ENCODE measurements at regions of chr5 and their contacts with region 1.

Region 1: GRCh38 chr5:10563945-10564837 is at the start of gene ANKRD33B:
- DNase-seq: no peak
- ATAC-seq: peak; percentile 64
- H3K4me3 ChIP-seq: peak within 1 kb of the TSS; percentile 87
- H3K27ac ChIP-seq: peak within 1 kb of the TSS; percentile 87
- H3K4me1 ChIP-seq: peaks cover 19% of the 10 kb centered on the region
- H3K27me3 ChIP-seq: no peaks in the 10 kb centered on the region
- CTCF ChIP-seq: no peak
- EP300 ChIP-seq: no peak
- POLR2A ChIP-seq: peak; percentile 93
- RAD21 ChIP-seq: peak; percentile 16; the same call in 1 of the 2 replicates
- polyA plus RNA-seq, gene ANKRD33B: 5.9 to 6.1 TPM

Region 2: GRCh38 chr5:10251405-10251804 is 312.8 kb before region 1 on chr5:
- CTCF ChIA-PET with region 1: no interaction called
- POLR2A ChIA-PET with region 1: no interaction called
- RAD21 ChIA-PET with region 1: no interaction called
- SMC1A ChIA-PET with region 1: no interaction called
- in situ Hi-C with region 1: no loop called
- intact Hi-C with region 1: no loop called
- DNase-seq: no peak
- ATAC-seq: no peak
- H3K4me3 ChIP-seq: peak overlapping the region; percentile 99
- H3K27ac ChIP-seq: peak overlapping the region; percentile 97
- H3K4me1 ChIP-seq: peaks cover 7% of the 10 kb centered on the region; the same call in 1 of the 2 replicates
- H3K27me3 ChIP-seq: no peaks in the 10 kb centered on the region
- CTCF ChIP-seq: no peak
- EP300 ChIP-seq: no peak
- POLR2A ChIP-seq: no peak
- RAD21 ChIP-seq: no peak

Region 3: DNA sequence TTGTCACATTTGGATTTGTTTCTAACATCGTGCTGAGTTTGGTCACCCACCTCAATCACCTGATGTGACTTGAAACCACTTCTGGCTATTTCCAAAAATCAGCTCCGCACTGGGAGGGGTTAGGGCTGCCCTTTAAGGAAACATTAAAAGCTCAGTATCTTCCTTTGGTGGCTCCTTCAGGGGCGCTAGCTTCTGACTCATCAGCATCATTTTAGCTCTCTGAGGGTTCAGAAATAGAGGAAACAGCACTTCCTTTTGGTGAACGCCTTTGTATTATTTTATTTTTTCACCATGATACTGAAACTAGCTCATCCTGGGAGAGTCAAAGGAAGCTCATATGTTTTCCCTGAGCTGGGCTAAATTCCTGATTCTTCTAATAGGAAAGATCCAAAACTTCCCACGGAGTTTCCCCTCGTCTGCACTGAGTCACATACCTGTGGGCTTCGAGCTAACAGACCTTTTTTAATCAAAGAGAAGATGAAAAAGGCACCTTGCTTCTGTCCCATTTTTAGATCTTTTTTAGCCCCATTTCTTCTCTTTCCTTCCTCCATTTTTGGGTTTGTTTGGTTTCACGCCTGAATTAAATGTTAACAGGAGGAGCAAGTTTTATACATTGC is 74.3 kb before region 1 on chr5:
- CTCF ChIA-PET with region 1: interaction called, 5 read pairs
- POLR2A ChIA-PET with region 1: no interaction called
- RAD21 ChIA-PET with region 1: interaction called, 3 read pairs
- SMC1A ChIA-PET with region 1: interaction called, 7 read pairs
- in situ Hi-C with region 1: no loop called
- intact Hi-C with region 1: loop called (anchors 5 kb)
- DNase-seq: peak; percentile 37
- ATAC-seq: peak; percentile 95
- H3K4me3 ChIP-seq: peak overlapping the region; percentile 3; the same call in 1 of the 2 replicates
- H3K27ac ChIP-seq: no peak overlapping the region
- H3K4me1 ChIP-seq: peaks cover 30% of the 10 kb centered on the region
- H3K27me3 ChIP-seq: no peaks in the 10 kb centered on the region
- CTCF ChIP-seq: no peak
- EP300 ChIP-seq: no peak
- POLR2A ChIP-seq: no peak
- RAD21 ChIP-seq: peak; percentile 15; the same call in 1 of the 2 replicates

Region 4: GRCh38 chr5:10577371-10578292 is 13.4 kb after region 1 on chr5:
- CTCF ChIA-PET with region 1: interaction called, 51 read pairs
- POLR2A ChIA-PET with region 1: interaction called, 53 read pairs
- RAD21 ChIA-PET with region 1: interaction called, 54 read pairs
- SMC1A ChIA-PET with region 1: interaction called, 73 read pairs
- in situ Hi-C with region 1: no loop called
- intact Hi-C with region 1: loop called (anchors 2 kb)
- DNase-seq: no peak
- ATAC-seq: peak; percentile 68
- H3K4me3 ChIP-seq: peak overlapping the region; percentile 46; the same call in 1 of the 2 replicates
- H3K27ac ChIP-seq: peak overlapping the region; percentile 77
- H3K4me1 ChIP-seq: peaks cover 64% of the 10 kb centered on the region
- H3K27me3 ChIP-seq: no peaks in the 10 kb centered on the region
- CTCF ChIP-seq: no peak
- EP300 ChIP-seq: no peak
- POLR2A ChIP-seq: no peak; the same call in 1 of the 2 replicates
- RAD21 ChIP-seq: no peak

Region 5: GRCh38 chr5:10607666-10608073 is 43.5 kb after region 1 on chr5:
- CTCF ChIA-PET with region 1: interaction called, 10 read pairs
- POLR2A ChIA-PET with region 1: interaction called, 22 read pairs
- RAD21 ChIA-PET with region 1: interaction called, 31 read pairs
- SMC1A ChIA-PET with region 1: interaction called, 55 read pairs
- in situ Hi-C with region 1: no loop called
- intact Hi-C with region 1: loop called (anchors 2 kb)
- DNase-seq: peak; percentile 63
- ATAC-seq: peak; percentile 73
- H3K4me3 ChIP-seq: peak overlapping the region; percentile 16
- H3K27ac ChIP-seq: peak overlapping the region; percentile 87
- H3K4me1 ChIP-seq: peaks cover 56% of the 10 kb centered on the region
- H3K27me3 ChIP-seq: no peaks in the 10 kb centered on the region
- CTCF ChIP-seq: peak; percentile 32 to 52 (median 32); a peak in 4 of 6 replicates
- EP300 ChIP-seq: peak; percentile 58 to 63; a peak in 2 of 4 replicates
- POLR2A ChIP-seq: no peak
- RAD21 ChIP-seq: peak; percentile 51

Region 6: DNA sequence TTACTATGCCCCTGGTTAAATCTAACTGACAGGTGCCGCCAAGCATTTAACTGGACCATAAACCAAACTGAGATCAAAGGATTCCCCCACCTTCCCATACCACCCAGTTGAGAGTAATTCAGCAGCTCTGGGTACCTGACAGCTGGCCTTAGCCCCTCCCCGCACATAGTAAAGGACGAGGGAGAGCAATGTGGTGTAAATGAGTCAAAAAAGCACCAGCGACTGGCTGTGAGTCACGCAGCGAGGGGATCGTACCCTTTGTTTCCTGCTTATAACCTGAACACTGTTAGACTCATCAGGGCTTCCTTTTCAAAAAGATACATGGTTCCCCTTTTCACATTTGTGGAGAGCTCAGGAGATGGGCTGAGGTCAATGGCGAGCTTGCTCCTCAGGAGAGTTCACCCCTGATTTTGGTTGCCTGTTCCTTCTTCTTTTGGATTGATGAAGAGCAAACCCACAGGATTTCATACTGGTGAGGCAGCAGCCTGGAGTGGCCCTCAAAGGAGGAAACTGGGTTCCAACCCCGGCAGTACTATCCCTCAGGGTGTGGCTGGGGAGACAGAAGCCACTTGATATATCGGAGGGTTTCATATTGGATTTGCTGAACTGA is 71.2 kb after region 1 on chr5:
- CTCF ChIA-PET with region 1: interaction called, 57 read pairs
- POLR2A ChIA-PET with region 1: interaction called, 4 read pairs
- RAD21 ChIA-PET with region 1: interaction called, 19 read pairs
- SMC1A ChIA-PET with region 1: interaction called, 71 read pairs
- in situ Hi-C with region 1: no loop called
- intact Hi-C with region 1: loop called (anchors 2 kb)
- DNase-seq: peak; percentile 94
- ATAC-seq: peak; percentile 66
- H3K4me3 ChIP-seq: peak overlapping the region; percentile 51
- H3K27ac ChIP-seq: peak overlapping the region; percentile 93
- H3K4me1 ChIP-seq: peaks cover 59% of the 10 kb centered on the region
- H3K27me3 ChIP-seq: no peaks in the 10 kb centered on the region
- CTCF ChIP-seq: no peak
- EP300 ChIP-seq: peak; percentile 89 to 98
- POLR2A ChIP-seq: peak; percentile 39; the same call in 1 of the 2 replicates
- RAD21 ChIP-seq: peak; percentile 5; the same call in 1 of the 2 replicates

Region 7: GRCh38 chr5:10689391-10690081 is 125.3 kb after region 1 on chr5:
- CTCF ChIA-PET with region 1: interaction called, 8 read pairs
- POLR2A ChIA-PET with region 1: no interaction called
- RAD21 ChIA-PET with region 1: interaction called, 5 read pairs
- SMC1A ChIA-PET with region 1: interaction called, 13 read pairs
- in situ Hi-C with region 1: no loop called
- intact Hi-C with region 1: loop called (anchors 2 kb)
- DNase-seq: no peak
- ATAC-seq: peak; percentile 75
- H3K4me3 ChIP-seq: no peak overlapping the region
- H3K27ac ChIP-seq: no peak overlapping the region
- H3K4me1 ChIP-seq: peaks cover 19% of the 10 kb centered on the region
- H3K27me3 ChIP-seq: no peaks in the 10 kb centered on the region
- CTCF ChIP-seq: peak; percentile 36 to 79 (median 67); a peak in 5 of 6 replicates
- EP300 ChIP-seq: no peak
- POLR2A ChIP-seq: no peak
- RAD21 ChIP-seq: peak; percentile 76